Activated CD4-positive, alpha-beta memory T cell treated with anti-CD3 and anti-CD28 coated beads, Interleukin-2, amount 10 ng/mL, durations not matched to agents 7 days and 5 days (primary cell): ENCODE measurements at regions of chr10 and their contacts with region 1.

Region 1: DNA sequence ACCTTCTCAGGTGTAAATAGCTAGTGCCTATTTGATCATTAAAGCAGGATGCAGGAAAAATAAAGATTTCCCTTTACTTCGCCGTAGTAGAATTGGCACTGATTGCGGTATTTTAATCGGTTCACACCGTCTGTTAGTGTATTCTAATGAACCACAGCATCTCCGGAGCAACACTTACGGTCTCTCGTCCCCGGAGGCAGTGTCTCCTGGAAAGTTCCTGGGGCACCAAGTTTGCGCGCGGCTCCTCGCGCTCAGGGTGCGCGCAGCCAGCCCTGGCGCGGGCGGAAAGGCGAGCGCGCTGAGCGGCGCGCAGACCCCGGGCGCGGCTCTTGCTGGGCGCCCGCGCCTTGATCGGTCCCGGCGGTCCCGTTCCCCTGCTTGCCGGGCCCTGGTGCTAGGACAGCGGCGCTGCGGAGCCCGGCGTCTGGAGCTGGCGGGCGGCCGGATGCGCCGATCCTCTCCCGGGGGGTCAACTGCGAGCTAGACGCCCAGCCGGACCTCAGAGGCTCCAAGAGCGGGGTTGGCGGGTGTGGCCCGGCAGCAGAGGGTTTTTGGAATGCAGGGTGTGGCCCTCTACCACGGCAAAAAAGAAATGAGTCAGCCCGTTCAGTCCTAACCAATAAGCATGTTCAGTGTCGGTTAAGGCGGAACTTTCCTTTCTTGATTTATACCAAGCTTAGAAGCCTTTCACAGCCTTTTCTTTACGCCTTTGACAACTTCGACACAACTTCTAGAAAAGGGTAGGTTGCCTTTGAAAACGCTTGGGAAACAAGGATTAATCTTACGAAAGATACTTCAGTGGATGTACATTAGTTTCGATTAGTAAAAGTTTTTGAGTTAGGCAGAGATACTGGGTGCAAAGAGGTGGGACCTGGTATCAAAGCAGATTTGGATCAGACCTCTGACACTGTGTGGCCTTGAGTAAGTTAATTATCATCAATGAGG is 166.8 kb upstream of the ASAH2 start:
- DNase-seq: peak; percentile 72
- H3K4me3 Mint-ChIP-seq: peak overlapping the region; percentile 89
- H3K27ac Mint-ChIP-seq: peak overlapping the region; percentile 93
- H3K4me1 Mint-ChIP-seq: peaks cover 70% of the 10 kb centered on the region
- H3K27me3 Mint-ChIP-seq: no peaks in the 10 kb centered on the region

Region 2: DNA sequence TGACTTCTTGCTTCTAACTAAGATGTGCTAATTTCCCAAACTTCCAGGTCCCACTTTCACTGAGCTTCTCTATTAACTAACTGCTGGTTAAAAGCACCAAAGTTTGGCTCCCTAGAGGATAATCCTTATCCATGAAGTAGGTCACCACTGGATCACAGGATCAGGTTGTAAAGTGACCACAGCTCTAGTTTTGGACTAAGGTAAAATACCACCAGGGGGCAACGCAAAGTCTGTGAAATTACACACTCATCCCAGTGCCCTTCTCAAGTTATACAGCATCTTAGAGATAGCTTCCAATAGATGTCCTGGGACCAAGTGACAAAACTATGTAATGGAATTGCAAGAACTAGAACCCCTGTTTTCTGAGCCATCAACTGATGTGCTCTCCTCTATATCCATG is 50.4 kb before region 1 on chr10:
- CTCF ChIA-PET with region 1: interaction called, 11 read pairs
- POLR2A ChIA-PET with region 1: interaction called, 4 read pairs
- DNase-seq: no peak
- H3K4me3 Mint-ChIP-seq: no peak overlapping the region
- H3K27ac Mint-ChIP-seq: no peak overlapping the region
- H3K4me1 Mint-ChIP-seq: peaks cover 17% of the 10 kb centered on the region
- H3K27me3 Mint-ChIP-seq: no peaks in the 10 kb centered on the region

Region 3: GRCh38 chr10:50431791-50432190 is 13.6 kb after region 1 on chr10:
- CTCF ChIA-PET with region 1: interaction called, 5 read pairs
- POLR2A ChIA-PET with region 1: interaction called, 32 read pairs
- DNase-seq: peak; percentile 25
- H3K4me3 Mint-ChIP-seq: peak overlapping the region; percentile 15
- H3K27ac Mint-ChIP-seq: peak overlapping the region; percentile 60
- H3K4me1 Mint-ChIP-seq: peaks cover 30% of the 10 kb centered on the region
- H3K27me3 Mint-ChIP-seq: peaks cover 2% of the 10 kb centered on the region

Region 4: DNA sequence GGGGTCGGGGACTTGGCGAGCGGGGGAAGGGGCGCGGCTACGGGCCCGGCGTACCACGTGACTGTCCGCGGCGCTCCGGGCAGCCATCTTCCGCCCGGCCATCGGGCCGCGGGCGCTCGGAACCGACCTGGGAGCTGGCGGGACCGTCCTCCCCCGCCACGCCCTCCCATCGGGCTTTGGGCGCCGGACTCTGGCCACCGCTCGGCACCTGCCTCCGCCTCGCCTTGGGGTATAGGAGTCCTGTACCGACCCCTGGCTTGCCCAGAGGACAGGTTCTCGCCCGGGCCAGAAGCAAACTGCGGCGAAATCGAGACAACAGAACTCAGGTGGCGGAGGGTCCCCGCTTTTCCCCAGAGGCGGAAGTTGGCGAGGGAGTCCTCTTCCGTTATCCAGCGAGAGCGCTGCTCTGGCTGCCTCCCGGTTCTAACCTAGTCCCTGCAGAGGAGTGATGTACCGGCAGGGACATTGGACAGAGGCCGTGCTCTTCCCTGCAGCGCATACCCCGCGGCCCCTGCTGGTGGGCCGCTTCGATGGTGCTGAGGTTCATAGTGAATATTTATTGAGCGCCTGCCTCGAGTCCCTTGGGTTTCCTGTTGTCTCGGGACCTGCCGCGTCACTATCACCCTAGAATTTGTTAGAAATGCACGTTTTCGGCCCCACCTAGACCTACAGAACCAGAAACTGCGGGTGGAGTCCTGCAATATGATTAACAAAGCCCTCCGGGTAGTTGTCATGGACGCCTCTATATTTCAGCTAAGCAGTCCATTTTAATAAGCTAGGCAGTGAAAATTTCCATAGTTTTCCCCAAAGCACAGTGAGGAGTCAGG is 206.9 kb after region 1 on chr10:
- CTCF ChIA-PET with region 1: interaction called, 5 read pairs
- POLR2A ChIA-PET with region 1: interaction called, 25 read pairs
- DNase-seq: peak; percentile 58
- H3K4me3 Mint-ChIP-seq: peak overlapping the region; percentile 90
- H3K27ac Mint-ChIP-seq: peak overlapping the region; percentile 87
- H3K4me1 Mint-ChIP-seq: peaks cover 39% of the 10 kb centered on the region
- H3K27me3 Mint-ChIP-seq: peaks cover 13% of the 10 kb centered on the region